ENCODE measurements at regions of chr6 and their contacts with region 1.

Region 1: DNA sequence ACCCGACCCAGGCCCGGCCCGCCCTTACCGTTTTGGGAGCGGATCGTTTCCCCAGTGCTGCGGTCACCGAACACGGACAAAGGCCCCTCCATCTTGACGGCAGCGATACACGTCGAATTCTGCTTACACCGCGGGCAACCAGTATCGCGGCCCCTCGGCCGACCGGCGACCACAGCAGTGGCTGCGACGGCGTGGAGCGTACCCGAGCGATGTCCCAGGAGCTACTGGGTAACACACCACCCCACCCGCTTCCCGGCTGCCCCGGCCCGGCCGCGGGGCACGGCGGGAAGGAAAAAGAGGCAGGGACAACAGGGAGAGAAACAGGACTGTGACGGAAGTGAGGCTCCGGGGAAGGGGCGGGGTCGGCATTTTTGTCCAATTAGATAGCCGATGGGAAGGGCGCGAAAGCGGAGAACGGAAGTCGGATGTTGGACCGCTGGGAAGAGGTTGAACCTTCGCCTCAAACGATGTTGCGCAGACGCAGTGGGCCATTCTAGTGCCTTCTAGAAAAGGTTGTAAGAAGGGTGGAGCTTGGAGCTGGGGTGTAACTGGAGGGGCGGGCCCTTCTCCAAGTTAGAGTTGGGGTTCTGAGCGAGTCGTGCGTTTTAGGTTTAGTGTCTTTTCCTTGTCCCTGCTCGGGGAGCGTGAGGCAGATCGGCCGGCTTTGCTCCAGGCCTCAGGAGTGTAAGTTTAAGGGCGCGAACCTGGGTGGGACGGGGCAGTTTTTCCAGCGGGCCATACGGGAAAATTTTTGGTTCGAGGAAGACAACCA is at the start of gene TCP1:
- DNase-seq: peak; percentile 97 to 100 (median 98)
- H3K4me3 ChIP-seq: peak within 1 kb of the TSS; percentile 81 to 90
- H3K4me3 Mint-ChIP-seq: peak within 1 kb of the TSS; percentile 94 to 99 (median 97)
- H3K27ac ChIP-seq: peak within 1 kb of the TSS; percentile 93
- H3K27ac Mint-ChIP-seq: peak within 1 kb of the TSS; percentile 93 to 99 (median 97)
- H3K4me1 ChIP-seq: peaks cover 54% of the 10 kb centered on the region
- H3K4me1 Mint-ChIP-seq: peaks cover 32 to 75% (median 60%) of the 10 kb centered on the region in 4 donors
- H3K27me3 ChIP-seq: no peaks in the 10 kb centered on the region
- H3K27me3 Mint-ChIP-seq: no peaks in the 10 kb centered on the region
- total RNA-seq, gene TCP1: 151 to 162 TPM

Region 2: DNA sequence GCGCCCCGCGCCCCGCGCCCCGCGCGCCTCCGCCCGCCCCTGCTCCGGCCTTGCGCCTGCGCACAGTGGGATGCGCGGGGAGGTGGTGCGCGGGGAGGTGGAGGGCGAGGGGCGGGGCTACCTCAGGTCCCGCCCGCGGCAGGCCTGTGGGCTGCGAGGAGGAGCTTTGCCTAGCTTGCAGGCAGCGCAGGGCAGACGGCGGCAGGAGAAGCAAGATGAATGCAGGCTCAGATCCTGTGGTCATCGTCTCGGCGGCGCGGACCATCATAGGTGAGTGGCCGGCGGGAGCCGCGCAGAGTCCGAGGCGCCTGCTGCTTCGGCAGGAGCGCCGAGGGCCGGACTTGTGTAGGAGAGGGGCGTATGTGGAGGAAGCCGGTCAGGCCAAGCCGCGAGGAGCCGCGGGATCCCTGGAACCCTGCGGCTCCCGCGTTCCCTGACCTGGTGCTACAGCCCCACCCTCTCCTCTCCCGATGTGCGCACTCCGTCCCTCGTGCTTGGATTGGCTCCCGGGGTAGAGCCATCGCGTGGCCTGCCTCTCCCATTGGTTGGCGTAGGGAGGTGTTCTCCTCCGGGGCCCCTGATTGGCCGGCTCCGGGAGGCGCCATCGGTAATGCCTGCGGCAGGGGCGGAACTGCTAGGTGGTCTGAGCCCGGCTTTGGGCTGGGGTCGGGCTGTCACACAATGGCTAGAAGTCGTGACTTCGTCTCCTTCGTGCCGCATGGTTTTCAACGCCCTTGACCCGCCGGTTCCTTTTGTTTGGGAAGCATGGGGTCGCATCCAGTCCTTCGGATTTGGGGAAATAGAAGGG is 27.5 kb before region 1 on chr6 and contains the start of gene ACAT2:
- CTCF ChIA-PET with region 1: interaction called, 6 read pairs
- POLR2A ChIA-PET with region 1: interaction called, 116 read pairs
- intact Hi-C with region 1: loop called (anchors 1 kb)
- DNase-seq: peak; percentile 90 to 93 (median 93)
- H3K4me3 ChIP-seq: peak within 1 kb of the TSS; percentile 87 to 99
- H3K4me3 Mint-ChIP-seq: peak within 1 kb of the TSS; percentile 94 to 99 (median 96)
- H3K27ac ChIP-seq: peak within 1 kb of the TSS; percentile 94
- H3K27ac Mint-ChIP-seq: peak within 1 kb of the TSS; percentile 93 to 98 (median 98)
- H3K4me1 ChIP-seq: peaks cover 16% of the 10 kb centered on the region
- H3K4me1 Mint-ChIP-seq: peaks cover 23 to 33% (median 28%) of the 10 kb centered on the region in 4 donors
- H3K27me3 ChIP-seq: no peaks in the 10 kb centered on the region
- H3K27me3 Mint-ChIP-seq: no peaks in the 10 kb centered on the region
- total RNA-seq, gene ACAT2: 30.5 to 30.9 TPM

Region 3: DNA sequence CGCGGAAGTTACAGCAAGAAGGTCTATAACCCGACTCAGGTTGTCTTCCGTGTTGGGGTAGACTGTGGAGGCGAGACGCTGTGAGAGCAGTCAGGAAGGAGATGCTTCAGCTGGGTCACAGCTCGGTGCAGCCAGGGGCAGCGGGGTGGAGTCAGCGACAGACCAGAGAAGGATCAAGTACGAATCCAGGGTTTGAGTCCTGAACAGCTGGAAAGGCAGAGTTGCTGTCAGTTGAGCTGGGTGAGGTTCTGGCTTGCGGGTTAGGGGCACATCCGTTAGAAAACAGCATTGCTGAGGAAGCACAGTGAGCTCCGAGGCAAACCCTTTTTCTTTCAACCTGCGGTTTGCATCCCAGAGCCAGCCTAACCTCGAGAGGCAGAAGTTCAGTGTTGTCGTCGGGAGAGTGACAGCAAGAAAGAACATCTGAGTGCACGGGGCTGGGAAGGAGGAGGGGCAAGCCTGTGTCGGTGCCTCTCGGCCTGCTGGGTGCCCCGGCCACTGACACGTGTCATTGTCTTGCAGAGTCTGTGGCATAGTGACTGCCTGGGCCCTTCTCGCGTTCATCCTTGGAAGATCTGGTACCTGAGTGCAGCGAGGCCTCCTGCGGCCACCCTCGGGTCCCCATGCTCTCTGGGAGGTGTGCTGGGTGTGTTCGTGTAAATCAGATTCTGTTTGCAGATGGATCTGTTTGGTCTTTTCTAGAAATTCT is 30.5 kb after region 1 on chr6:
- CTCF ChIA-PET with region 1: interaction called, 3 read pairs
- POLR2A ChIA-PET with region 1: interaction called, 23 read pairs
- intact Hi-C with region 1: no loop called
- DNase-seq: peak in 4 of 5 donors; percentile 37 to 44 (median 41)
- H3K4me3 ChIP-seq: peak overlapping the region in 1 of 2 donors; percentile 17
- H3K4me3 Mint-ChIP-seq: peak overlapping the region; percentile 77 to 90 (median 87)
- H3K27ac ChIP-seq: no peak overlapping the region
- H3K27ac Mint-ChIP-seq: peak overlapping the region; percentile 5 to 94 (median 89)
- H3K4me1 ChIP-seq: peaks cover 13% of the 10 kb centered on the region
- H3K4me1 Mint-ChIP-seq: peaks cover 13 to 28% (median 15%) of the 10 kb centered on the region in 4 donors
- H3K27me3 ChIP-seq: no peaks in the 10 kb centered on the region
- H3K27me3 Mint-ChIP-seq: no peaks in the 10 kb centered on the region

Region 4: DNA sequence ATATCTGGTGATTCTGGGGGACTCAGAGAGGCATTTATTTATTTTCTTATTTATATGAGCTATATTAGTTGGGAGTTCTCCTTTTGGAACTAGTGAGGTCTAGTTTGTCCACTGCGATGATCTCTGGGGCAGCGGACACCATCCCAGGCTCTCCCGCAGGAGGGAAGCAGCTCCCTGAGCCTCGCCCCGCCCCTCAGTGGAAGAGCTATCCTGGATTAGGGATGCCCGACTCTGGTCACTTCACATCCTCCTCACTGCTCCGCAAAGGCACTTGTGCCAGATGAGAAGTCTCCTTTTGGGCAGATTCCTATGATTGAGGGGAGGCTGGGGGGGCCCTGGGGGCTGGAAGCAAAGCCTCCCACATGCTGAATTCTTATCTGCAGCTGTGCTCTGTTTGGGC is 97.6 kb after region 1 on chr6:
- CTCF ChIA-PET with region 1: no interaction called
- POLR2A ChIA-PET with region 1: no interaction called
- intact Hi-C with region 1: no loop called
- DNase-seq: no peak
- H3K4me3 ChIP-seq: no peak overlapping the region
- H3K4me3 Mint-ChIP-seq: no peak overlapping the region
- H3K27ac ChIP-seq: no peak overlapping the region
- H3K27ac Mint-ChIP-seq: no peak overlapping the region
- H3K4me1 ChIP-seq: no peaks in the 10 kb centered on the region
- H3K4me1 Mint-ChIP-seq: no peaks in the 10 kb centered on the region
- H3K27me3 ChIP-seq: peaks cover 3% of the 10 kb centered on the region
- H3K27me3 Mint-ChIP-seq: peaks cover 23 to 34% of the 10 kb centered on the region in 2 donors

Region 5: GRCh38 chr6:159899994-159900745 is 110.6 kb after region 1 on chr6:
- CTCF ChIA-PET with region 1: no interaction called
- POLR2A ChIA-PET with region 1: no interaction called
- intact Hi-C with region 1: no loop called
- DNase-seq: no peak
- H3K4me3 ChIP-seq: no peak overlapping the region
- H3K4me3 Mint-ChIP-seq: no peak overlapping the region
- H3K27ac ChIP-seq: no peak overlapping the region
- H3K27ac Mint-ChIP-seq: no peak overlapping the region
- H3K4me1 ChIP-seq: no peaks in the 10 kb centered on the region
- H3K4me1 Mint-ChIP-seq: no peaks in the 10 kb centered on the region
- H3K27me3 ChIP-seq: no peaks in the 10 kb centered on the region
- H3K27me3 Mint-ChIP-seq: no peaks in the 10 kb centered on the region

Region 6: GRCh38 chr6:159968440-159969203 is 179.1 kb after region 1 on chr6 and contains the start of gene IGF2R:
- CTCF ChIA-PET with region 1: no interaction called
- POLR2A ChIA-PET with region 1: interaction called, 6 read pairs
- intact Hi-C with region 1: loop called (anchors 2 kb)
- DNase-seq: peak; percentile 91 to 94 (median 92)
- H3K4me3 ChIP-seq: peak within 1 kb of the TSS; percentile 61 to 62
- H3K4me3 Mint-ChIP-seq: peak within 1 kb of the TSS; percentile 88 to 96 (median 94)
- H3K27ac ChIP-seq: peak within 1 kb of the TSS; percentile 75
- H3K27ac Mint-ChIP-seq: peak within 1 kb of the TSS; percentile 92 to 97 (median 94)
- H3K4me1 ChIP-seq: peaks cover 44% of the 10 kb centered on the region
- H3K4me1 Mint-ChIP-seq: peaks cover 29 to 45% (median 38%) of the 10 kb centered on the region in 4 donors
- H3K27me3 ChIP-seq: no peaks in the 10 kb centered on the region
- H3K27me3 Mint-ChIP-seq: no peaks in the 10 kb centered on the region
- total RNA-seq, gene IGF2R: 77.5 to 79.2 TPM